ENCODE measurements at regions of chr5 and their contacts with region 1.

Region 1: DNA sequence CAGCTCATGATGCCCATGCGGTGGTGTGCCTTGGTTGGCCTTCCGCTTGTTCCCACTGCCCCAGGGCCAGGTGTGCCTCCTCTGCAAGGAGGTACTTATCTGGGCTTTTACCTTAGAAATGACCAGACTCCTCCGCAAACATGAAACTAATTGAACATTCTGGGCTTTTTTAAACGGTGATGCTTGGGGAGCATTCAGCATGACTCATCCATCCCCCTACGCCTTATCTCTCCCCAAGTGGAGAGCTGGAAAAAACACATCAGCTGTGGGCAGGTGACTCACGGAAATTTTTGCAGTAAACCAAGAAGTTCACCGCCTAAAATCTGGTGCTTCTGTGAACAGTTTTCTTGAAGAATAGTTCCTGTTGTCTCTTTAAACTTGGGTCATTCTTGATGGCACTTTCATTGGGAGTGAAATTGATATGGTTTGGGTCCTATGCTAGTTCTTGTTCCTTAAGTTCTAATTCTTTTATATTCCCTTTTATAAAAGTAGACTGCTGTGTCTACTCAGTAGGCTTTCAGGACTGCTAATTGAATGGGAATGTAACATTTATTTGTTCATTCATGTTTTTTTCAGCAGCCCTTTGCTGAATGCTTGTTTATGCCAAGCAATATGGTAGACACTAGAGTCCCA is 39.6 kb downstream of the SFXN1 start:
- DNase-seq: peak in 12 of 14 experiments; percentile 22 to 73 (median 54)
- ATAC-seq: peak; percentile 24
- H3K4me3 ChIP-seq: no peak overlapping the region
- H3K4me3 Mint-ChIP-seq: peak overlapping the region; percentile 46
- H3K27ac ChIP-seq: peak overlapping the region; percentile 31 to 58
- H3K27ac Mint-ChIP-seq: peak overlapping the region; percentile 84
- H3K4me1 ChIP-seq: peaks cover 42% of the 10 kb centered on the region
- H3K4me1 Mint-ChIP-seq: peaks cover 82% of the 10 kb centered on the region
- H3K27me3 ChIP-seq: no peaks in the 10 kb centered on the region
- H3K27me3 Mint-ChIP-seq: no peaks in the 10 kb centered on the region
- CTCF ChIP-seq: no peak

Region 2: DNA sequence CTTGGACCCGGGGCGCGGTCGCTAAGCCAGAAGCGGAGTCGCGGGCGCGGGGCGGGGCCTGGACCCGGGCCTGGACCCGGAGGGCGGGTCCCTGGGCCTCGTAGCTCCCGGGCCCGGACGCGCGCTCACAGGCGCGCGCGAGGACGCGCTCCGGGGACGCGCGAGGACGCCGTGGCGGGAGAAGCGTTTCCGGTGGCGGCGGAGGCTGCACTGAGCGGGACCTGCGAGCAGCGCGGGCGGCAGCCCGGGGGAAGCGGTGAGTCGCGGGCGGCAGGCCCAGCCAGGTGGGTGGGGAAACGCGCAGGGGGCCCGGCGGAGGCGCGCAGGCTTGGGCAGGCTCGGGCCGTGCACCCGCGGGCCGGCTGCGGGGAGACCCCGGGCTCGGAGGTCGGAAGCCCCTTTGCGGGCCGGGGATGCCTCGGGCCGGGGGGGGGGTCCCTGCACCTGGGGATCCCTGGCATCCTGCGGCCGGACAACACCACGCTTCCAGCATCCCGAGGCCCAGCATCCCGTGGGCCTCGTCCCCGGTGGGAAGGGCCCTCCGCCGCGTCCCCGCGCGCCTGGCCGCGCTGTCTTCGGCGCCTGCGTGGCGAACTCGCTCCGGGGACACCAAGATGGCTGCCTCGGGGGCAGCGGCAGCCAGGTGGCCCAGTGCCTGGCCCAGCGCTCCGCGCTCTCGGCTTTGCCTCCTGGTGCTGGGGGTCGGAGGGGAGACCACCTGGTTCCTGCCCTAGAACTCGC is 39.4 kb before region 1 on chr5 and contains the start of gene SFXN1:
- CTCF ChIA-PET with region 1: interaction called, 3 read pairs
- POLR2A ChIA-PET with region 1: interaction called, 13 read pairs
- intact Hi-C with region 1: loop called (anchors 2 kb)
- DNase-seq: peak; percentile 51 to 88 (median 74)
- ATAC-seq: peak; percentile 40
- H3K4me3 ChIP-seq: peak within 1 kb of the TSS; percentile 84
- H3K4me3 Mint-ChIP-seq: peak within 1 kb of the TSS; percentile 98
- H3K27ac ChIP-seq: peak within 1 kb of the TSS; percentile 48 to 60
- H3K27ac Mint-ChIP-seq: peak within 1 kb of the TSS; percentile 92
- H3K4me1 ChIP-seq: peaks cover 41% of the 10 kb centered on the region
- H3K4me1 Mint-ChIP-seq: peaks cover 57% of the 10 kb centered on the region
- H3K27me3 ChIP-seq: no peaks in the 10 kb centered on the region
- H3K27me3 Mint-ChIP-seq: peaks cover 9% of the 10 kb centered on the region
- CTCF ChIP-seq: no peak
- total RNA-seq, gene SFXN1: 133 to 138 TPM

Region 3: GRCh38 chr5:175501759-175502339 is 16.1 kb before region 1 on chr5:
- CTCF ChIA-PET with region 1: interaction called, 7 read pairs
- POLR2A ChIA-PET with region 1: interaction called, 3 read pairs
- intact Hi-C with region 1: loop called in 1 of 2 experiments (anchors 2 kb)
- DNase-seq: no peak
- ATAC-seq: no peak
- H3K4me3 ChIP-seq: no peak overlapping the region
- H3K4me3 Mint-ChIP-seq: no peak overlapping the region
- H3K27ac ChIP-seq: no peak overlapping the region
- H3K27ac Mint-ChIP-seq: peak overlapping the region; percentile 68
- H3K4me1 ChIP-seq: peaks cover 3% of the 10 kb centered on the region
- H3K4me1 Mint-ChIP-seq: peaks cover 26% of the 10 kb centered on the region
- H3K27me3 ChIP-seq: no peaks in the 10 kb centered on the region
- H3K27me3 Mint-ChIP-seq: no peaks in the 10 kb centered on the region
- CTCF ChIP-seq: no peak

Region 4: GRCh38 chr5:175542232-175542965 is 24.5 kb after region 1 on chr5:
- CTCF ChIA-PET with region 1: no interaction called
- POLR2A ChIA-PET with region 1: no interaction called
- intact Hi-C with region 1: no loop called
- DNase-seq: peak in 2 of 14 experiments; percentile 17 to 28
- ATAC-seq: no peak
- H3K4me3 ChIP-seq: no peak overlapping the region
- H3K4me3 Mint-ChIP-seq: no peak overlapping the region
- H3K27ac ChIP-seq: no peak overlapping the region
- H3K27ac Mint-ChIP-seq: no peak overlapping the region
- H3K4me1 ChIP-seq: no peaks in the 10 kb centered on the region
- H3K4me1 Mint-ChIP-seq: peaks cover 2% of the 10 kb centered on the region
- H3K27me3 ChIP-seq: no peaks in the 10 kb centered on the region
- H3K27me3 Mint-ChIP-seq: peaks cover 5% of the 10 kb centered on the region
- CTCF ChIP-seq: no peak